Left cardiac atrium (tissue), 4 donors: ENCODE measurements at regions of chr12 and their contacts with region 1.

Region 1: DNA sequence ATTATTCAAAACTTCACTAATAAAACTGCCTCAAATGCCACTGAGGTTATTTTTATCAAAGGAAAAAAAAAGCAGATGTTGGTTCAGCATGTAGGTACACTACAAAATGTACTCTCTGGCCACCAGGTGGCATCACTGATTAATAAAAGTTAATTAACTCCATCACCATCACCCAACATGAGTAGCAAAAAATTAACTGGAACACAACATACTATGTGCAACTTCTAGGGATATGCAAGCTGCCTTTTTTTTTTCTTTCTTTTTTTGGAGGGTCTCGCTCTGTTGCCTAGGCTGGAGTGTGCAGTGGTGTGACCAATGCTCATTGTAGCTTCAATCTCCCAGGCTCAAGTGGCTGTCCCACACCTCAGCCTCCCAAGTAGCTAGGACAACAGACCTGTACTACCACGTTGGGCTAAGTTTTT is 43.8 kb upstream of the NR2C1 start:
- DNase-seq: peak; percentile 73
- ATAC-seq: peak; percentile 90 to 94

Region 2: DNA sequence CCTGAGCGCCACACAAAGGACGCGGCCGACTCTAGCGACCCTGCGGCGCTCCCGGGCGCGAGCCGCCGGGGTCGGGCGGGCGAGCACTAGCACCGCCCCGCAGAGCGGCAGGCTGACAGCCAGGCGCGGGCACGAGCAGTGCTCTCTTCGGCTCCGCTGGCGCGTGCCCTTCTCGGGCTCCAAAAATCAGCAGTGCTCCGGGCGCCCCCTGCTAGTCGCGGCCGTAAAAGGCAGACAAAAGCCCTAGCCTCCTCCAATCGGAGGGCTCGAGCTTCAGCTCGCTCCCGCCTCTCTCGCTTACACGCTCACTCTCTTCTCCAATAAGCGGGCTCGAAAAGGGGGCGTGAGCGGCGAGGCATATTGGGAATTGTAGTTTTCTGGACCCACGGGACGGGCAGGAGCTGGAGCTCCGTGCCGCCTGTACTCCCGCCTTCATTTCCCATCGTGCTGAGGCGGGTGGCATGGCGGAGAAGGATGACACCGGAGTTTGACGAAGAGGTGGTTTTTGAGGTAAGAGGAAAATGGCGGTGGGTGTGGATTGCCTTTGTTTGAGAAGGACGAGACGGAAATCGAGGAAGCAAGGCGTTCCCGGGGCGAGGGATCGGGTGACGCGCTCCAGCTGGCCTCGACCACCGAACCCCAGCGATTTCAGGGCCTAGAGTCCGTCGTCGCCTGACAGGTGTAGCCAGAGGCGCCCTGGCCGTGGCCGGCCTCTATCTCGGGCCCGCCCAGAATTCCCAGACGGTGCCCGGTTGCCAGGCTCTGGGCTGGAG is 100.4 kb after region 1 on chr12 and contains the starts of genes FGD6 and VEZT:
- intact Hi-C with region 1: loop called (anchors 5 to 10 kb)
- DNase-seq: peak; percentile 99
- ATAC-seq: peak; percentile 95 to 97
- total RNA-seq, gene FGD6: 16.2 to 16.3 TPM
- total RNA-seq, gene VEZT: 53.2 to 60.0 TPM

Region 3: DNA sequence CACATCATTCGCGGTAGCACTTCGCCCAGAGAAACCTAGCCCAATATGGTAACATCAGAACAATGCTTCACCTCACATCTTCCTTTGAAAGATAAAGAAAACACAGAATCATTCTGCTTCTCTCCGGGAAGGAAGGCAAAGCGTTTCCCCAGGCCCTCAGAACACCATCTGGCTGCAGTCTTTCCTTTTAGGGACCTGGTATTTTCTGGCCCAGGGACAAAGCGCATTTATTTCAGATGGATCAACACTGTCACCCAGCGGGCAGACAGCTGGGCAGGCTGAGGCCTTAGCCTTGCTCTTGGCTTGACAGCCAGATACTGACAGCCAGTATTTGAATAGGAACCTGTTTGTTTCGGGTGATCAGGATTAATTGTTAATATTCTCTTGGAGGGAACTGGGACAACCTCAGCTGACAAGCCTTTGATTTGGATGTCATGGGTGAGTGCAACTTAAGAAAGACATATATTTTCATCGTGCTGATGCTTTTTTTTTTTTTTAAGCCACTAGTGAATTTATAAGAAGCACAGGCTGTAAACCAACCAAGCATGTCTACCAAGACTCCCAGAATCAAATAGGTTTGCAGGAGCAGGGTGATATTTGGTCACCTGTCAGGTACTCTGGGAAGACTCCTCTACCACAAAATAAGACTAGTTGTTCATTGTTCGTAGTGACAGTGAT is 219.3 kb after region 1 on chr12:
- intact Hi-C with region 1: loop called (anchors 1 to 5 kb)
- DNase-seq: peak; percentile 66
- ATAC-seq: peak; percentile 93 to 95

Region 4: DNA sequence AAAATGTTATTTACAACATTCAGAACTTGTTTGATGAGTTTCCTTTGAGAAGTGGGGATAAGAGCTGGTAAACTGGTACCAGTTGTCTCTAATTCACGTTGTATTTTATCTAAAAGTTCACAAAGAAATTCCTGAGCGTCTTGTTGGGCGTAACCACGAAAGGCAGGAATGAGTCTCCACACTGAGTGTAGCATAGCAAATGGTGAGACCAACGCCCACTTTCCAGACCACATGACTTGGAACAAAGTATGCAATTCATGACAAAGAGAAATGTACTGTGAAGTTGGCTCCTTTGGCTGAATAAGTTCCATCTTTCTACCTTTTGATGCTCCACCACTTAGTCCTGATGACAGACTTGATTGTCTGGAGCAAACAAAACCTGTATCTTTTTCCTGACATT is 415.7 kb after region 1 on chr12:
- intact Hi-C with region 1: loop called (anchors 5 to 10 kb)
- DNase-seq: no peak
- ATAC-seq: peak in 1 of 2 donors; percentile 83

Region 5: DNA sequence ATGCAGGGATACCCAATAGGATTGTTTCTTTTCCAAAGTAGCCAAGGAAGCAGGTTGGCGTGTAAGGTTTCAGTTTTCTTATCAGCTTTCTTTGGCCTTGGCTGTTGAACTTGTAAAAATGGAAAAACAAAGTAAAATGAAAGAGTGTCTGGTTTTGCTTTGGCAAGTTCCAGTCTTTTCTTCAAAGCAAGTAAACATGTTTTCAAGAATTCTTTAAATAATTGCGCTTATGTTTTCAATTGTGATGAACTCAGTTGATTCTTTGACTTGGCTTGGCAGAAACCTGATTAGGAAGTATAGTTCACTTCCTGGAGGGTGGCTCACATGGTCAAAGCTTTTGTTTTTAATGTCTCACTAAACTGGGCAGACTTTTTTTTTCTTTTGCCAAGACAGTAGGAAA is 546.3 kb after region 1 on chr12:
- intact Hi-C with region 1: no loop called
- DNase-seq: no peak
- ATAC-seq: peak; percentile 34 to 57